T-cell (primary cell): ENCODE measurements at regions of chr21 and their contacts with region 1.

Region 1: DNA sequence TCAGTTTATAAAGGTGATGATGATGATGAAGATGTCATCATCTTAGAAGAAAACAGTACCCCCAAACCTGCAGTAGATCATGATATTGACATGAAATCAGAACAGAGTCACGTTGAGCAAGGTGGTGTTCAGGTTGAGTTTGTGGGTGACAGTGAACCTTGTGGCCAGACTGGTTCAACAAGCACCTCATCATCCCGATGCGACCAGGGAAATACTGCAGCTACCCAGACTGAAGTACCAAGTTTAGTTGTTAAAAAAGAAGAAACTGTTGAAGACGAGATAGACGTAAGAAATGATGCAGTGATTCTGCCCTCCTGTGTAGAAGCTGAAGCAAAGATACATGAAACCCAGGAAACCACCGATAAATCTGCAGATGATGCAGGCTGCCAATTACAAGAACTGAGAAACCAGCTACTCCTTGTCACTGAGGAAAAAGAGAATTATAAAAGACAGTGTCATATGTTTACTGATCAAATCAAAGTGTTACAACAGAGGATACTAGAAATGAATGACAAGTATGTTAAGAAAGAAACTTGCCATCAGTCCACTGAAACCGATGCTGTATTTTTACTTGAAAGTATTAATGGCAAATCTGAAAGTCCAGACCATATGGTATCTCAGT is 16.0 kb upstream of the CHAF1B start:
- DNase-seq: no peak
- ATAC-seq: no peak
- H3K4me3 ChIP-seq: no peak overlapping the region
- H3K4me3 Mint-ChIP-seq: no peak overlapping the region
- H3K27ac ChIP-seq: no peak overlapping the region
- H3K27ac Mint-ChIP-seq: peak overlapping the region in 1 of 2 donors; percentile 29
- H3K4me1 ChIP-seq: no peaks in the 10 kb centered on the region
- H3K4me1 Mint-ChIP-seq: no peaks in the 10 kb centered on the region
- H3K27me3 ChIP-seq: no peaks in the 10 kb centered on the region
- H3K27me3 Mint-ChIP-seq: no peaks in the 10 kb centered on the region

Region 2: DNA sequence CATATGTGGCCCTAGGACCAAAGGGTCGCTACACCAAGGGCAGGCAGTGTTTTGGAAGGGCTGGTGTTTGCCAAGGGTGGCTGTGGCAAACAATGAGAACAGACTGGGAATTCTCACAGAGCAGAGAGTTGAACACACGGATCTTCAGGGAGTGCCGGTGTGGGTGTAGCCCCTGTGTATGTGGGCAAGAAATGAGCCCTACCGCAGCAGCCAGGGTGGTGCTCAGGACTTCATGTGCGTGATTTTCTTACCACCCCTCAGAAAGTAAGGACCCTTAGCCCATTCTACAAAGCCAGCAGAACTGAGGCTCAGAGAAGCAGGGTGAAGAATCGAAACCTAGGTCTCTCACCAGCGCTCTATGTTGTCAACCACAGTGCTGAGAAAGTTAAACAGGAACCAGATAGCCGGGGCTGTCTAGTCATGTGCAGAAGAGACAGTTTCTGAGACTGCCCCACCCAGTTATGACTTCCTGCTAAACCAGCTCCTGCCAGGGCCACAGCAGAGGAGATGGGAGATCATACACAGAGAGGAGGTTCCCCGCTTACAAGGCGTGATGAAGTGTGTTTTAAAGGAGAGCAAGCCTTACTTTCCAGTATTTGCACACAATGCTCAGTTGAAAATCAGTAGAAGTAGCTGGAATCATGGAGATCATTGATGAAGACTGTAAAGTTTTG is 71.1 kb before region 1 on chr21:
- CTCF ChIA-PET with region 1: no interaction called
- POLR2A ChIA-PET with region 1: interaction called in 1 of 2 experiments, 10 read pairs
- DNase-seq: peak; percentile 47 to 90 (median 74)
- ATAC-seq: peak; percentile 99
- H3K4me3 ChIP-seq: peak overlapping the region; percentile 31 to 56
- H3K4me3 Mint-ChIP-seq: peak overlapping the region; percentile 59 to 82 (median 75)
- H3K27ac ChIP-seq: peak overlapping the region; percentile 83
- H3K27ac Mint-ChIP-seq: peak overlapping the region; percentile 99 to 100
- H3K4me1 ChIP-seq: peaks cover 20 to 43% of the 10 kb centered on the region in 2 experiments
- H3K4me1 Mint-ChIP-seq: peaks cover 30 to 47% (median 35%) of the 10 kb centered on the region in 3 donors
- H3K27me3 ChIP-seq: no peaks in the 10 kb centered on the region
- H3K27me3 Mint-ChIP-seq: no peaks in the 10 kb centered on the region

Region 3: GRCh38 chr21:36408561-36408960 is 39.4 kb after region 1 on chr21:
- CTCF ChIA-PET with region 1: no interaction called
- POLR2A ChIA-PET with region 1: no interaction called
- DNase-seq: no peak
- ATAC-seq: no peak
- H3K4me3 ChIP-seq: no peak overlapping the region
- H3K4me3 Mint-ChIP-seq: no peak overlapping the region
- H3K27ac ChIP-seq: no peak overlapping the region
- H3K27ac Mint-ChIP-seq: no peak overlapping the region
- H3K4me1 ChIP-seq: no peaks in the 10 kb centered on the region
- H3K4me1 Mint-ChIP-seq: peaks cover 0 to 1% (median 0%) of the 10 kb centered on the region in 3 donors
- H3K27me3 ChIP-seq: no peaks in the 10 kb centered on the region
- H3K27me3 Mint-ChIP-seq: no peaks in the 10 kb centered on the region